Heart left ventricle (tissue), 16 donors: ENCODE measurements at regions of chr7 and their contacts with region 1.

Region 1: DNA sequence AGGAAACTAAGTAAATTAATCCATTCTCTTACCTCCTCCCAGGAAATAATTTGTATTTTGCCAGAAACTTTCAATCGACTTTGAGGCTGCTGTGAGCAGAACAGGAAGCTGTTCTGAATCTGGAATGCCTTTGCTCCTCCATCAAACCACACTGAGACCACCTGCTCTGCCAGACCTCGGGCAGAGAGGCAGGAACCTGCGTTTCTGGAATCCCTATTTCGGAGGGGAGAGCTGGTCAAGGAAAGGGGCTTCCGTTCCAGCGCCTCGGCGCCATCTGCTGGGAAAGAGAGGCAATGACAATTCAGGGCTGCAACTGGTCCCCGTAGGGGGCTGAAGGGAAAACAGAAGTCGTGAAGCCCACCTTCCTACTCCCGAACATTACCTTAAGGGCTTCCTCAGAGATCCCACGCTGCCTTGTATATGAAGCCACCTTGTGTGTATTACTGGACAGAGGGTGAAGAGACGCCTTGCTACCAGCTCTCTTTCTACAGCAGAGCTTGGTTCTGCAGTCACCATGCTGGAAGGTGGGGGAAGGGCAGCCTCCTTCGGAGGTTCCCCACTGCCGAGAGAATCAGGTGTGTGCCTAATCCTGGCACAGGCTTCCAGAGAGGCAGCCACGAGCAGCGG is 31.2 kb downstream of the ZNF467 start:
- DNase-seq: peak; percentile 46 to 85 (median 70)
- ATAC-seq: peak; percentile 74 to 88 (median 80)
- H3K4me3 ChIP-seq: peak overlapping the region in 10 of 12 donors; percentile 15 to 57 (median 44)
- H3K27ac ChIP-seq: peak overlapping the region in 2 of 12 donors; percentile 8 to 28
- H3K4me1 ChIP-seq: peaks cover 0 to 12% (median 9%) of the 10 kb centered on the region in 12 donors
- H3K27me3 ChIP-seq: no peaks in the 10 kb centered on the region
- CTCF ChIP-seq: peak; percentile 78 to 95 (median 90)
- POLR2A ChIP-seq: no peak

Region 2: DNA sequence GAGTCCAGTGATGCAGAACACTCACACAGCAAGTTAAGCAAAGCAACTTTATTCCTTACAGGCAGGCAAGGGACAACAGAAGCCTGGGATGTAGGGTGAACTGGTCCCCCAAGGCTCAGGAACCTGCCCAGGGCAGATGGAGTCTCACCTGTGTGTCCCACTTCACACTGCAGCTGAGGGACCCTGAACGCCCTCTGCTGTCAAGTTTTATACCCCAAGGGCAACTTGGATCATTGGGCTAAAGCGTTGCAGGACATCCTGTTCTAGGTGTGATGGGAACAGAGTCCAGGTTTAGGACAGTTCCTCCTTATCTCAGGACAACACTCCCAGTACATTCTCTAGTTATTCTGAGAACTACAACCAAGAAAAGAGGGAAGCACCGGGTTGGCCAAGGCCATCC is 195.1 kb before region 1 on chr7:
- intact Hi-C with region 1: no loop called
- DNase-seq: no peak
- ATAC-seq: peak in 1 of 4 donors; percentile 13
- H3K4me3 ChIP-seq: no peak overlapping the region
- H3K27ac ChIP-seq: no peak overlapping the region
- H3K4me1 ChIP-seq: no peaks in the 10 kb centered on the region
- H3K27me3 ChIP-seq: no peaks in the 10 kb centered on the region
- CTCF ChIP-seq: no peak
- POLR2A ChIP-seq: no peak

Region 3: GRCh38 chr7:149662591-149663095 is 79.5 kb before region 1 on chr7:
- intact Hi-C with region 1: loop called in 7 of 10 experiments (anchors 2 to 5 kb)
- DNase-seq: peak in 4 of 5 donors; percentile 43 to 67 (median 55)
- ATAC-seq: peak; percentile 82 to 93 (median 92)
- H3K4me3 ChIP-seq: no peak overlapping the region
- H3K27ac ChIP-seq: peak overlapping the region in 1 of 12 donors; percentile 44
- H3K4me1 ChIP-seq: no peaks in the 10 kb centered on the region
- H3K27me3 ChIP-seq: peaks cover 0 to 12% (median 0%) of the 10 kb centered on the region in 9 donors
- CTCF ChIP-seq: peak in 11 of 12 donors; percentile 31 to 55 (median 44)
- POLR2A ChIP-seq: no peak

Region 4: DNA sequence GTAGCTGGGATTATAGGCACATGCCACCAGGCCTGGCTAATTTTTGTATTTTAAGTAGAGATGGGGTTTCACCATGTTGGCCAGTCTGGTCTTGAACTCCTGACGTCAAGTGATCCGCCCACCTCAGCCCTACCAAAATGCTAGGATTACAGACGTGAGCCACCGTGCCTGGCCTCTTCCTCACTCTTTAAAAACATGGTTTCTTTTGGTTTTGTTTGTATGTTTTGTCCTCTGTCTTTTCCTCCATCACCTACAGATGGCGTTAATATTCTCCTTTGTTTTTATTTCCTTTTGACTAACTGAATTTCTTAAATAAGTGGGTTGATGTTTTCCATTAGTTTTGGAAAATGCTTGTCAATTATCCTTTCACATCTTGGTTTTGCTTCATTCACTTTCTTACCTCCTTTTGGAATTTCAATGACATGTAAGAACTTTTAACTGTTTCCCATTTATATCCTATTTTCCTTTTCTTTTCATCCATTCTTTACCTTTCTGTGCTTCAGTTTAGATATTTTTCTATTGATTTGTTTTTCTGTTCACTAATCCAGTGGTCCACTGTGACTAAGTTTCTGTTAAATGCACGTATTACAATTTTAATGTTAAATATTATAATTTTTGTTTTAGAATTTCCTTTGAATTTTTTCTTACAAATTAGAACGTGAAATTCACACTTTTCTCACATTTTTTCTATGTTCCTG is 72.9 kb before region 1 on chr7:
- intact Hi-C with region 1: loop called in 8 of 10 experiments (anchors 2 to 5 kb)
- DNase-seq: no peak
- ATAC-seq: no peak
- H3K4me3 ChIP-seq: no peak overlapping the region
- H3K27ac ChIP-seq: no peak overlapping the region
- H3K4me1 ChIP-seq: peaks cover 0 to 14% (median 5%) of the 10 kb centered on the region in 12 donors
- H3K27me3 ChIP-seq: peaks cover 0 to 5% (median 0%) of the 10 kb centered on the region in 9 donors
- CTCF ChIP-seq: peak in 10 of 12 donors; percentile 2 to 55 (median 36)
- POLR2A ChIP-seq: no peak

Region 5: DNA sequence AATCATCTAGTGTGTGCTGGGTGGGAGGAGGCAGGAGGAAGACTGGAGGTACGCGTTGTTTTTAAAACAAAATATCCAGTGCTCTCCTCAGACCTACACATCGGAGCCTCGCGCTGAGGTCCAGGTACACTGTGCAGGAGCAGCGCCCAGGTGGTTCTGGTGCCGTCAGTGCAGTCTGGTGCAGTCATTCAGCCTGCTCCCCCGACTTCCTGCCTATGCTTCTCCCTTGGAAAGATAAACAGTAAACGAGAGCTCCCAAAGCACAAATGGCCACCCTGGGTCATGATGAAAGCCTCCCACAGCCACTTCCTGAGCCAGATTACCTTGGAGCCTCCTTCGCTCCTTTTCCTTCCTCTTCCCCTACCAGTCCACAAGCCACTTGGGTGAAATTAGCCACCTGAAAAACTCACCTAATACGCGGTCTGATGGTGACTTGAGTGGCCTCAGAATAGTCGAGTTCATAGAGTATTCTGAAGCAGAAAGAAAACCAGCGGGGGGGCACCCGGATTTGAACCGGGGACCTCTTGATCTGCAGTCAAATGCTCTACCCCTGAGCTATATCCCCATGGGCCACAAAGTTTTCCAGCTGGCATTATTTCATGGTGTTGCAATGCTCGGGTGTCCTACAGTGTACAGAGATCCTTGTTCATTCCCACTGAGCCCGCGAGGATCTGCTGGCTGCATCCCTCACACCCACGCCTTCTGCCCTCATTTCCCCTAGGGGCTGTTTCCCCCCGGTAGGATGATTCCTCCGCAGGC is 51.3 kb before region 1 on chr7:
- intact Hi-C with region 1: no loop called
- DNase-seq: peak in 2 of 5 donors; percentile 11 to 32
- ATAC-seq: peak in 3 of 4 donors; percentile 55 to 81 (median 65)
- H3K4me3 ChIP-seq: no peak overlapping the region
- H3K27ac ChIP-seq: no peak overlapping the region
- H3K4me1 ChIP-seq: peaks cover 0 to 6% (median 0%) of the 10 kb centered on the region in 12 donors
- H3K27me3 ChIP-seq: peaks cover 4 to 57% (median 25%) of the 10 kb centered on the region in 9 donors
- CTCF ChIP-seq: no peak
- POLR2A ChIP-seq: no peak

Region 6: DNA sequence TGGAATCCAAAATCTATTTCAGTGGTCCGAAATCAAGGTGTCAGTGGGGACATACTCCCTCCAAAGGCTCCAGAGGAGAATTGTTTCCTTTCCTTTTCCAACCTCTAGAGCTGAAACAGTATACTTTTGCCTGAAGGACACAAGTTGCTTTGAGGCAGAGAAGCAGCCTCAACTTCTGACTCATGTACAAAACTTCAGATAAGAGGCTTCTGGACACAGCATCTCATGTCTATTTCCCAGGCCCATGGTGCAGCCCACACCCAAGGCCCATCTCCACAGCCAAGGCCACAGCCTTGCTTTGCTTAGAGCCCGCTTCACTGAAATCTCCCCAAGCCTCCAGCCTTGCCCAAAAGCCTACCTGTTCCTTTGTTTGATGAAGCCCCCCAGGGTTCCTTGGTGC is 37.7 kb before region 1 on chr7:
- intact Hi-C with region 1: no loop called
- DNase-seq: no peak
- ATAC-seq: no peak
- H3K4me3 ChIP-seq: no peak overlapping the region
- H3K27ac ChIP-seq: no peak overlapping the region
- H3K4me1 ChIP-seq: no peaks in the 10 kb centered on the region
- H3K27me3 ChIP-seq: no peaks in the 10 kb centered on the region
- CTCF ChIP-seq: no peak
- POLR2A ChIP-seq: no peak

Region 7: GRCh38 chr7:149854611-149855360 is 112.6 kb after region 1 on chr7:
- intact Hi-C with region 1: no loop called
- DNase-seq: peak in 4 of 5 donors; percentile 71 to 89 (median 76)
- ATAC-seq: peak; percentile 78 to 90 (median 84)
- H3K4me3 ChIP-seq: no peak overlapping the region
- H3K27ac ChIP-seq: peak overlapping the region in 9 of 12 donors; percentile 21 to 65 (median 39)
- H3K4me1 ChIP-seq: peaks cover 0 to 21% (median 7%) of the 10 kb centered on the region in 12 donors
- H3K27me3 ChIP-seq: no peaks in the 10 kb centered on the region
- CTCF ChIP-seq: no peak
- POLR2A ChIP-seq: no peak